HEK293 (cell line): ENCODE measurements at regions of chr15 and their contacts with region 1.

Region 1: DNA sequence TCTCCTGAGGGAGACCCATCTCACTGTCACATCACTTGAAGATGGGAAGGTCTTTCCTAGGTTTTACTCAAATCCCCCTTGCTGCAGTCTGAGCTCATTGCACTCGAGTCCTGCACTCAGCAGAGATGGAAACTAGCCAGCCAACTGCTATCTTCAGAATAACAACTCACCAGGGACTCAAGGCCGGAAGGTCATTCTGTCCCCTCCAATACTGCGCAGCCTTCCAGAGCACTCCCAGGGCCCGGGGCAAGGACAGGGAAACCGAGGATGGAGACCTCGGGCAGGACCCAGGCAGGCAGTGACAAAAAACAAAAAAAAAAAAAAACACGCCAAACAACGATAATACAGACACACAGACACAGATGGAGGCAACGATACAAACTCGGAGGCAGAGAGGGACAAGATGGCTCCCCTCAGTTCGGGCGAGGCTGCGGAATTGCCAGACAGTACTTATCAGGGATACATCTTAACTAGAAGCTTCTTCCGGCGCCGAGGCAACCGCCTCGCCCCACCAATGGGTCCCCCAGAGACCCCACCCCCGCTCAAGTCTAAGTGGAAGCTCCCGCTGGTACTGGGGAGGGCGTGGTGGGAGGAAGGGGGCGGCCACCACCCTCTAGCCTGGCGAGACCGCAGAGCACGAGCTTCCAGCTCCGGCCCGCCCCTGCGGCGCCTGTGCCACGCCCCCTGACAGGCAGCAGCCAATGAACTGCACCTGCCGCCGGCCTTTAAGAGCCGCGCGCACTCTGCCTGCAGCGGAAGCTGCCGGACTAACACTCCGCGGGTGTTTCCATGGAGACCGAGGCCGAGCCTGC is 7.0 kb upstream of the MAP1A start:
- H3K4me3 ChIP-seq: peak overlapping the region; percentile 48
- H3K27ac ChIP-seq: peak overlapping the region; percentile 38; the same call in 1 of the 2 replicates
- H3K4me1 ChIP-seq: peaks cover 7% of the 10 kb centered on the region
- CTCF ChIP-seq: no peak

Region 2: GRCh38 chr15:43440721-43441281 is 69.6 kb before region 1 on chr15:
- CTCF ChIA-PET with region 1: interaction called, 21 read pairs
- POLR2A ChIA-PET with region 1: no interaction called
- H3K4me3 ChIP-seq: no peak overlapping the region
- H3K27ac ChIP-seq: no peak overlapping the region
- H3K4me1 ChIP-seq: no peaks in the 10 kb centered on the region
- CTCF ChIP-seq: 0 out of 2 replicates have a peak, but pooled peaks have one; percentile 32

Region 3: DNA sequence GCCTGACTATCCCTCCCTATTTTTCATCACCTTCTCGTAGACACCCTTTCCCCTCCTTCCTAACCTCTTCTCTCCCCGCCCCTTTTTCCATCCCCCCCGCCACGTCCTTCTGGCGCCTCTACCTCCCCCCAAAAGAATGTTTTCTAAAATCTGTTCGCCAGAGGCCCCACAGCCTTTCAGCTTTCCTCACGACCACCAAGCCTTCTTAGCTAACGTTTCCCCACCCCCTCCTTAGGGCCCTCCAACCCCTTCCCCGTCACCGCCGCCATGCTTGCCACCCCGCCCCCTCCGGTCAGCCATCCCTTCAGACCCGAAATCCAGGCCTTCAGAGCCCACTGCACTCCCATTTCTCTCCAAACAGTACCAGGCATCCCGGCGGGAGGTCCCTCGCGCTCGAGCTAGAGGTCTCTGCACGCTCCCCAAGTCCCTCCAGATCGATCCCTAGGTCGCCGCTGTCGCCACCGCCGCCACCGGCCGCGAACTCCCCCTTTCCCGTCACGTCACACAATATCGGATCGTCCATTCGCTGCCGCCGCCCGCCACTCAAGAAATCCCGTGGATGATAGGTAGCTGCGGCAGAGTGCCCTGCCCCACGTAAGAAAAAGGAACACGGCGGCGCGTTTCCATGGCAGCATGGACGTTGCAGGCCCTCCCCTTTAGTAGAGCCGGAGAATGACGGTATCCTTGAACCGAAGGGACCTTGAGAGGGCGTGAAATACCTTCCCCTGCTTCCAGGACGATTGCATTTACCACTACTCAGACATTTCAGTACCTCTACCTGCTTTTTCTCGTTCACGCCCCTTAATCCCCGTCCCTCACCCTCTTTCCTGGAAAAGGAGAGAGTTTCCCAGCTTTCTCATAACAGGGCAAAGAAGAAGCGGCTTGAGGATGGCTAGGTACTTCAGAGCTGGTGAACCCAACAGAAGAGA is 17.5 kb before region 1 on chr15 and contains the start of gene TP53BP1:
- CTCF ChIA-PET with region 1: interaction called, 7 read pairs
- POLR2A ChIA-PET with region 1: interaction called, 17 read pairs
- H3K4me3 ChIP-seq: peak within 1 kb of the TSS; percentile 88
- H3K27ac ChIP-seq: peak within 1 kb of the TSS; percentile 7; the same call in 1 of the 2 replicates
- H3K4me1 ChIP-seq: peaks cover 10% of the 10 kb centered on the region
- CTCF ChIP-seq: no peak

Region 4: GRCh38 chr15:43522247-43522646 is 11.8 kb after region 1 on chr15:
- CTCF ChIA-PET with region 1: interaction called, 11 read pairs
- POLR2A ChIA-PET with region 1: interaction called, 3 read pairs
- H3K4me3 ChIP-seq: no peak overlapping the region
- H3K27ac ChIP-seq: no peak overlapping the region
- H3K4me1 ChIP-seq: peaks cover 6% of the 10 kb centered on the region; the same call in 1 of the 2 replicates
- CTCF ChIP-seq: no peak